K562 (cell line): ENCODE measurements at regions of chr1 and their contacts with region 1.

Region 1: DNA sequence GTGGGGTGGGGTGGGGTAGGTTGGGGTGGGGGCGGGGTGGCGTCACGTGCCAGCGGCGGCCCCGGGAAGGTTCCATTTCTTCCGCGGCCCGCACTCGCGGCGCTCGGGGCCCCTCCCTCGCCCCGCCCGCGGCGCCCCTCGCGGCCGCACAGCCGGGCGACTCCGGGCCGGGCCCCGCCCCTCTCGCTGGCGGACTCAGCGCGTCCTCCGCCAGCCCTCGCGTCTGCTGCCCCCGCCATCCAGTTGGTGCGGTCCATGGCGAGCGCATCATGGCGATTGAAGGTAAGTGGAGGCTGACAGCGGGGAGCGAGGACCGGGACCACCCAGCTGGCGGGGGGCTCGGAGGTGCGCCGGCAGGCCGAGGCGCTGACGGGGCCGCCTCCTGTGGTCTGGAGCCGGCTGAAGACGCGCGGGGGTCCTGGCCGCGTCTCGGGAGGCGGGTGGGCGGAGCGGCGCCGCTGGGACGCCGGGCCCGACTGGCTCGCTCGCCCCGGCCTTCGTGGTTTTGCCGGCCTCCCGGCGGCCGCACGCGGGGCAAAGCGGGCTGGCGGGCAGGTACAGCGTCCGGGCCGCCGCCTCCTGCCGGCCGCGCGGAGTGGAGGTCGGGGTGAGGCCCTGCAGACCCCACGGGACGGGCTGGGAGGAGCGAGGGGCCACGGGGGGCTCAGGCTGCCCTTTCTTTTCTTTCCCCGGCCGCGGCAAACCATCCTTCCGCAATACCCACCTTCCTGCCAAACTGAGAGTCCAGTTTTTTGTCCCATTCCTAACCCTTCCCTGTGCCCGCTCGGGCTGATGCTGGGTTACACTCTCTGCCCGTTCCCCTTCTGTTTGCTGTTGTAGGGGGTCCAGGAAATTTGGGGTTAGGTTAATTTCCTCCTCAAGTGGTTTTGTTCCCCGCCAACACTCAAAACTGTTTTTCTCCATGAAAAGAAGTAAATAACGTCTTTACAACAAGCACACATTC is at the start of gene SYT14:
- DNase-seq: peak in 3 of 4 experiments; percentile 12 to 15 (median 13)
- ATAC-seq: no peak
- H3K4me3 ChIP-seq: no peak within 1 kb of the TSS
- H3K27ac ChIP-seq: no peak within 1 kb of the TSS
- H3K4me1 ChIP-seq: peaks cover 0 to 3% of the 10 kb centered on the region in 2 experiments; a peak in 1 of 5 replicates
- H3K27me3 ChIP-seq: peaks cover 2 to 4% of the 10 kb centered on the region in 2 experiments; a peak in 2 of 5 replicates
- CTCF ChIP-seq: no peak
- EP300 ChIP-seq: no peak
- POLR2A ChIP-seq: no peak
- RAD21 ChIP-seq: no peak
- polyA plus RNA-seq, gene SYT14: not detected

Region 2: GRCh38 chr1:209839875-209840491 is 98.3 kb before region 1 on chr1:
- CTCF ChIA-PET with region 1: no interaction called
- POLR2A ChIA-PET with region 1: no interaction called
- in situ Hi-C with region 1: no loop called
- intact Hi-C with region 1: no loop called
- DNase-seq: peak in 1 of 4 experiments; percentile 11
- ATAC-seq: no peak
- H3K4me3 ChIP-seq: no peak overlapping the region
- H3K27ac ChIP-seq: no peak overlapping the region; the same call in 2 of the 3 replicates
- H3K4me1 ChIP-seq: no peaks in the 10 kb centered on the region
- H3K27me3 ChIP-seq: no peaks in the 10 kb centered on the region
- CTCF ChIP-seq: no peak
- EP300 ChIP-seq: no peak
- POLR2A ChIP-seq: no peak
- RAD21 ChIP-seq: no peak

Region 3: DNA sequence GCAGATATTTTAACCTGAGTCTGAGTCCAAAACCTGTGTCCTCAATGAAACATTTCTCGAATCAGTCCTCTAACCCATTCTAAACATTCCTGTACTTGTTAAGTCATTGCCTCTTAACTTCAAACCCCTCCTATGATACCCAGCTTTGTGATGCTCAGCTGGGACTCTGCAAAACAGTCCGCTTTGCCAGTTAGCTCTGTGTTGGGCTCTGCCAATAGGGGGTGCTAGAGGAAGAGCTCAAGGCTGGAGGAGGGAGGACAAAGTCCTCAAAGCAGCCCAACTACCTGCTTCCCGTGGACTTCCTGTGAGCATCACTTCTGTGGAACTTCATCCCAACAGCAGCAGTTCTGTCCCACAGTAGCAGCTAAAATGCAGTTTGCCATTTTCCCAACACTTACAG is 38.3 kb before region 1 on chr1:
- CTCF ChIA-PET with region 1: no interaction called
- POLR2A ChIA-PET with region 1: no interaction called
- in situ Hi-C with region 1: no loop called
- intact Hi-C with region 1: loop called (anchors 2 kb)
- DNase-seq: peak; percentile 24 to 62 (median 42)
- ATAC-seq: peak; percentile 97
- H3K4me3 ChIP-seq: no peak overlapping the region
- H3K27ac ChIP-seq: no peak overlapping the region
- H3K4me1 ChIP-seq: peaks cover 0 to 8% of the 10 kb centered on the region in 2 experiments; a peak in 1 of 5 replicates
- H3K27me3 ChIP-seq: peaks cover 0 to 16% of the 10 kb centered on the region in 2 experiments; a peak in 3 of 5 replicates
- CTCF ChIP-seq: peak; percentile 67 to 80 (median 69)
- EP300 ChIP-seq: no peak
- POLR2A ChIP-seq: no peak
- RAD21 ChIP-seq: peak; percentile 20 to 55